Activated naive CD8-positive, alpha-beta T cell treated with anti-CD3 and anti-CD28 coated beads, Interleukin-2, amount 10 ng/mL, durations not matched to agents 7 days and 5 days (primary cell): ENCODE measurements at regions of chr18 and their contacts with region 1.

Region 1: GRCh38 chr18:77101410-77102258 is 30.9 kb downstream of the MBP start:
- DNase-seq: peak; percentile 52
- ATAC-seq: peak; percentile 19
- H3K4me3 Mint-ChIP-seq: peak overlapping the region; percentile 79
- H3K27ac Mint-ChIP-seq: peak overlapping the region; percentile 95
- H3K4me1 Mint-ChIP-seq: peaks cover 76% of the 10 kb centered on the region
- H3K27me3 Mint-ChIP-seq: no peaks in the 10 kb centered on the region

Region 2: DNA sequence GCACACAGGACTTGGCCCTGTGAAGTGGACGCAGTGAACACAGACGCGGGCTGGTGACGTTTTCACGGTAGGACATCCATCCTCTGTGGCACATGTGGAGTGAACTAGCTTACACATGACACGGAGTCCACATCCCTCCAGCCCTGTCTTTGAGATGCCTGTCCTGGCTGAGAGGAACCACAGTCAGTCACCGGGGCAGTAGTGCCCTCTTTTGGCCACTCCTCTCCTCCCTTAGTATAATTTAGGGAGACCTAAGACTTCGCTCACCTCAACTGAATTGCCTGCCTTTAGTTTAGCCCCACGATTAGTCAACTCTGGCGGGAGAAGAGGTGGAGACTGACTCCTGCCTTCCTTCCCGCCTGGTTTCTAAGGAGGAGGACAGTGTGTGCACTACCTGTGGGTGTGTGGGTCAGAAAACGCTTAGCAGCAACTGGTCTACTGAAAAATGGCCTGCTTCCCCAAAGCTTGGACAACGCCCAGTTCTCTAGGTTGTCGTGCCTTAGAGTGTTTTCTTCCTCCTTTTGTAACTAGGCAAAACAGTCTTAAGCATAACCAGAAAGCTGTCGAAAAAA is 39.6 kb before region 1 on chr18:
- POLR2A ChIA-PET with region 1: interaction called, 23 read pairs
- DNase-seq: no peak
- ATAC-seq: peak; percentile 3
- H3K4me3 Mint-ChIP-seq: peak overlapping the region; percentile 85
- H3K27ac Mint-ChIP-seq: peak overlapping the region; percentile 97
- H3K4me1 Mint-ChIP-seq: peaks cover 75% of the 10 kb centered on the region
- H3K27me3 Mint-ChIP-seq: no peaks in the 10 kb centered on the region

Region 3: GRCh38 chr18:77067291-77068061 is 34.2 kb before region 1 on chr18:
- POLR2A ChIA-PET with region 1: interaction called, 23 read pairs
- DNase-seq: peak; percentile 75
- ATAC-seq: peak; percentile 69
- H3K4me3 Mint-ChIP-seq: peak overlapping the region; percentile 67
- H3K27ac Mint-ChIP-seq: peak overlapping the region; percentile 86
- H3K4me1 Mint-ChIP-seq: peaks cover 74% of the 10 kb centered on the region
- H3K27me3 Mint-ChIP-seq: no peaks in the 10 kb centered on the region

Region 4: DNA sequence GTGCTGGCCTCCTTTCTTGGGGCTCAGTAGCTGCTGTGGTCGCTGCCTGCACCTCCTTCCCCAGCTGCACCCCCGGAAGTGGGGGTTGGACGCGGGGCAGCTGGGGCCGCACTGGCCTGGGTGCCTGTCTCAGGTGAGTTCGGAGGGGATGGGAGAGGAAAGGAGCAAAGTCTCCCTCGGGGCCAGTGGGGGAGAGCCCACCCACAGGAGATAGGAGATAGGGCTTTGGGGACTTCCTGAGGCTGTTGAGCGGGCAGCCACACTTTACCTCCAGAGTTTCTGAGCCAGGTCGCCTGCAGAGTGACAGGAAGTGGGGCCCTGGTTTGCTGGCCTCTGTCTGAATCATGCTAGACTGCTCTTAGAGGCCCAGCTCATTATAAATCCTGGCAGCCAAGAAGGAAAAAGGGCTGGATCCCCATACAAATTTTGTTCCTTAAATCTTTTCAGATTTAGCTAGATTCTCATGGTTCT is 22.9 kb after region 1 on chr18:
- POLR2A ChIA-PET with region 1: interaction called, 12 read pairs
- DNase-seq: peak; percentile 72
- ATAC-seq: peak; percentile 90
- H3K4me3 Mint-ChIP-seq: peak overlapping the region; percentile 85
- H3K27ac Mint-ChIP-seq: peak overlapping the region; percentile 96
- H3K4me1 Mint-ChIP-seq: peaks cover 74% of the 10 kb centered on the region
- H3K27me3 Mint-ChIP-seq: no peaks in the 10 kb centered on the region

Region 5: GRCh38 chr18:77191071-77191751 is 89.6 kb after region 1 on chr18:
- POLR2A ChIA-PET with region 1: no interaction called
- DNase-seq: no peak
- ATAC-seq: no peak
- H3K4me3 Mint-ChIP-seq: no peak overlapping the region
- H3K27ac Mint-ChIP-seq: no peak overlapping the region
- H3K4me1 Mint-ChIP-seq: no peaks in the 10 kb centered on the region
- H3K27me3 Mint-ChIP-seq: peaks cover 7% of the 10 kb centered on the region